GM12878 (cell line): ENCODE measurements at regions of chr2 and their contacts with region 1.

Region 1: GRCh38 chr2:191555092-191555742 is 122.7 kb upstream of the NABP1 start:
- DNase-seq: no peak
- ATAC-seq: peak; percentile 97
- H3K4me3 ChIP-seq: no peak overlapping the region
- H3K27ac ChIP-seq: no peak overlapping the region
- H3K4me1 ChIP-seq: no peaks in the 10 kb centered on the region
- H3K27me3 ChIP-seq: no peaks in the 10 kb centered on the region; a peak in 1 of 4 replicates
- CTCF ChIP-seq: peak; percentile 52 to 81 (median 72); a peak in 5 of 6 replicates
- EP300 ChIP-seq: no peak
- POLR2A ChIP-seq: no peak
- RAD21 ChIP-seq: peak; percentile 96

Region 2: DNA sequence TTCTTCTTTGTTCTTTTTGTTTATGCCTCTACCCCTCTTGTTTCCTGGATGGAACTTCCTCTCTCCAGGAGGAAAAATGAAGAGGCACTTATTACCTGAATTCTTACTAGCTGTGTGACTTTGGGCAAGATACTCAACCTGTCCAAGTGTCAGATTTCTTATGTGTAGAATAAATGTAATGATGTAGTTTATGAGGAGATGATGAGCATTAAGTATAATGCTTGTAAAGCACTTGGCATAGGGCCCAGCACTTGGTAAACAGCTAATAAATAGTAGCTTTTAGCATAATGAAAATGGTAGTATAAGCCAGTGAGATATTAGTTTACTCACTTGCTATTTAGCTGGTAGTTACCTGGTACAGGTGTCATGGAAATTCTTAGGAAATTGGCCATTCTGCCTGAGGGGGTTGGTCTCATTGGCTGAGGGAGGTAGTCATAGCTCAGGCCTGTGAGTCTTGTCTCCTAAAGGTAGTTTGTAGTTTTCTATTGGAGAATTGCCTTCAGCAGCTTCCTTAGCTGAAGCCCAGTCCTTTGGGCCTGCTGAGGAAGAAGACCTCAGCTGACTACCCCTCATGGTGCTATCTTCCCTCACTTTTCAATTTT is 10.7 kb before region 1 on chr2:
- CTCF ChIA-PET with region 1: interaction called, 7 read pairs
- POLR2A ChIA-PET with region 1: no interaction called
- RAD21 ChIA-PET with region 1: interaction called, 4 read pairs
- SMC1A ChIA-PET with region 1: interaction called, 10 read pairs
- in situ Hi-C with region 1: no loop called
- intact Hi-C with region 1: no loop called
- DNase-seq: no peak
- ATAC-seq: no peak
- H3K4me3 ChIP-seq: no peak overlapping the region
- H3K27ac ChIP-seq: no peak overlapping the region
- H3K4me1 ChIP-seq: no peaks in the 10 kb centered on the region
- H3K27me3 ChIP-seq: no peaks in the 10 kb centered on the region
- CTCF ChIP-seq: no peak
- EP300 ChIP-seq: no peak
- POLR2A ChIP-seq: no peak
- RAD21 ChIP-seq: no peak

Region 3: DNA sequence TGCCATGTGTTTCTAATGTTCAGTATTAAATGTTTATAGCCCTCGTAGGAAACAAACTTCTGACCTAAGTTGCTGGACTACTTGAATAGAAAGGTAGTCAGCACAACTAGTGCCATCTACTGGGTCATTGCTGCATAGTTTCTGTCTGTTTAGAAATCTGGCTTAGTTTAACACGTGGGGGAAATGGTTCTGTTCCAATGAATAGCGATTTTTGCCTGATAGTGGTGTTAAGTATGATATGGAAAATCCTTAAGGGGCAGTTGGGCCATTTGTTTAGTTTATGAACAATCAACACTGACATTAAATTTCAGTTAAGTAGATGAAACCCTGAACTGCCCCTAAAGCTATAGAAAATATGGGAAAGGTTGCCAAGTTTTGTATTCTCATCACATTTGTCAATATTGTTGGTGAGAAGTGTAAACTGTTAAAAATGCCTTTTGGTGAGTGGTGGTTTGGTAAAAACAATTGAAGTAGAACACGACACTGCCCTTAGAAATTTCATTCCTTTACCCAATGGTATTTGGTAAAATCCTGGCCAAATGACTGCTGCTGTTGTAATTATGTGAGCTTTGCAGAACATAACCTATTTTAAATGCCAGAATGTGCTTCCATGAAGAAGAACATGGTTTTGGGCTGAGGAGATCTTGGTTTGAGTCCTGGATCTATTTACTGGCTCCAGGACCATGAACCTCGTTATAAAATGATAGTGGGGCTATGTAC is 136.0 kb after region 1 on chr2:
- CTCF ChIA-PET with region 1: interaction called, 24 read pairs
- POLR2A ChIA-PET with region 1: no interaction called
- RAD21 ChIA-PET with region 1: interaction called, 5 read pairs
- SMC1A ChIA-PET with region 1: interaction called, 20 read pairs
- in situ Hi-C with region 1: no loop called
- intact Hi-C with region 1: no loop called
- DNase-seq: peak; percentile 59
- ATAC-seq: peak; percentile 68
- H3K4me3 ChIP-seq: no peak overlapping the region
- H3K27ac ChIP-seq: no peak overlapping the region
- H3K4me1 ChIP-seq: no peaks in the 10 kb centered on the region
- H3K27me3 ChIP-seq: no peaks in the 10 kb centered on the region
- CTCF ChIP-seq: peak; percentile 73 to 86 (median 77); a peak in 5 of 6 replicates
- EP300 ChIP-seq: no peak
- POLR2A ChIP-seq: no peak; the same call in 1 of the 2 replicates
- RAD21 ChIP-seq: peak; percentile 96

Region 4: GRCh38 chr2:192286093-192286701 is 731.0 kb after region 1 on chr2:
- CTCF ChIA-PET with region 1: no interaction called
- POLR2A ChIA-PET with region 1: no interaction called
- RAD21 ChIA-PET with region 1: no interaction called
- SMC1A ChIA-PET with region 1: no interaction called
- in situ Hi-C with region 1: no loop called
- intact Hi-C with region 1: loop called (anchors 10 kb)
- DNase-seq: no peak
- ATAC-seq: peak; percentile 59
- H3K4me3 ChIP-seq: no peak overlapping the region
- H3K27ac ChIP-seq: no peak overlapping the region
- H3K4me1 ChIP-seq: no peaks in the 10 kb centered on the region
- H3K27me3 ChIP-seq: no peaks in the 10 kb centered on the region
- CTCF ChIP-seq: peak; percentile 32 to 38 (median 36); a peak in 4 of 6 replicates
- EP300 ChIP-seq: no peak
- POLR2A ChIP-seq: no peak
- RAD21 ChIP-seq: peak; percentile 43

Region 5: DNA sequence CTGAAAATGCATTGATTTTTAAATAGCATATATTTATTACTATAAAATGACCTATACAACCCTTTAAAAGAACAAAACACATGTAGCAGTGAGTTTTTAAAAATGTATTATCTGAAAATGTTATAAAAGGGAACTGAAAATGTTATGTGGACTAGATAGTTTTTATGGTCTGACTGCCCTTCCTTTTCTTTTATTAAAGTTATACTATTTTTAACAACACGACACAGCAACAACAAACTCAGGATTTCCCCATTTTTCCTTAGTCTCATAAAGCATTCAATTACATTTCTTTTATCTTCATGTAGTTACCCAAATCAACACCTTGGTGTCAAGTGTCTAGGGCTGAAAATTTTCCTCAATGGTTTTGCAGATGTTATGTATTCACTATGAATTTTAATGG is 772.4 kb after region 1 on chr2:
- CTCF ChIA-PET with region 1: no interaction called
- POLR2A ChIA-PET with region 1: no interaction called
- RAD21 ChIA-PET with region 1: no interaction called
- SMC1A ChIA-PET with region 1: no interaction called
- in situ Hi-C with region 1: no loop called
- intact Hi-C with region 1: no loop called
- DNase-seq: peak; percentile 11
- ATAC-seq: peak; percentile 38; the same call in 2 of the 3 replicates
- H3K4me3 ChIP-seq: no peak overlapping the region
- H3K27ac ChIP-seq: no peak overlapping the region
- H3K4me1 ChIP-seq: no peaks in the 10 kb centered on the region
- H3K27me3 ChIP-seq: no peaks in the 10 kb centered on the region
- CTCF ChIP-seq: no peak
- EP300 ChIP-seq: no peak
- POLR2A ChIP-seq: no peak
- RAD21 ChIP-seq: no peak